GM13976 (cell line): ENCODE measurements at regions of chr5 and their contacts with region 1.

Region 1: DNA sequence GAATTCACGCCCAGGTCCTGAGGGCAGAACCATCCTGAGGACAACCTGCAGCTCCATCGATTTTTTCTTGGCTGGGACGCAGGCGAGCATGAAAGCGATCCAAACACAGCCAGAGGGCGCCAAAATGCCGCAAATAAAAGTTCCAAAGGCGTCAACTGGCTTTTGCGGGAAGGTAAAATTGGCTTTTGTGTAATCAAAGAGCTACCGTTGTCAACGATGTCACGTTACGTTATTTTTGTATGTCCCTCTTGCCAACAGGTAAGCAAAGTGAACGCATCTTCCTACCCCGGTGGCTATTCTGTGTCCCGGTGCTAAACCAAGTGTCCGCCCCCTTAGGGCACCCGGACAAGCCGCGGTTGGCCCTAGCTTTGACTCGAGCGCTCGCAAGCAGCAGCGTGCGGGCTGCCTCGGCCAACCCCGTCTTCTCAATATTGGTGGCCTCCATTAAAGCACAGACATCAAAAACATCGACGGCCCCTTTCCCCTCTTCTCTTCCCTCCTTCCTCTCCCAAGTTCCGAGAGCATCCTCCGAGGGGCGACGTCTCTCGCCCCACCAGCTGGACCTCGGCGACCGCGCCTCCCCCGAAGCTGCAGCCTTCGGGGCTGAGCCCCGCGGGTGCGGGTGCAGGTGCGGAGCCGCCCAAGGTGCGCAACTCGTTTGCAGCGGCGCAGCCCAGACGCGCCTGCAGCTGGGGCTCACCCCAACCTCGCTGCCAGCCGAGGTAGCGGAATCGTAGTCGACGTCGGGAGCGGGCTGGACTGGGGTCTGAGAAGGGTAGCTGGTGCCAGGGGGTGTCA is 1.1 kb upstream of the BASP1 start:
- DNase-seq: peak; percentile 73
- CTCF ChIP-seq: peak; percentile 81

Region 2: GRCh38 chr5:17384181-17384580 is 167.8 kb after region 1 on chr5:
- in situ Hi-C with region 1: no loop called
- DNase-seq: no peak
- CTCF ChIP-seq: no peak

Region 3: DNA sequence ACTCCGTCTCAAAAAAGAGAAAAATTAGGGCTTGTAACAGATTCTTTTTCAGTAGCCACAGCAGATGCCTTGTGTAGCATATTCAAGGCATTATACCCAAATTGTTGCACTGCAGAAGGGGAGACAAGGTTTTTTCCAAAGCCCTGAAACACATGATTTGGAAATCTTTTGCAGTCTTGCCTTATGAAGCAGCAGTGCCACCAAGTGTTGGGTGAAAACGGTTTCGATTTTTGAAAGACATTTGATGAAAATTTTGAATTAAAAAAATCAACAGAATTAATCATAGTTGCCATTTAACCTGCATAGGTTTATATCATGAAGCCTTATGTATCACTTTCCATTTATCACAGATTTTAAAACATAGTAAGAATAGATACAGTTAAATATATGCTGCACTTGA is 897.3 kb after region 1 on chr5:
- in situ Hi-C with region 1: loop called (anchors 25 kb)
- DNase-seq: no peak
- CTCF ChIP-seq: no peak

Region 4: DNA sequence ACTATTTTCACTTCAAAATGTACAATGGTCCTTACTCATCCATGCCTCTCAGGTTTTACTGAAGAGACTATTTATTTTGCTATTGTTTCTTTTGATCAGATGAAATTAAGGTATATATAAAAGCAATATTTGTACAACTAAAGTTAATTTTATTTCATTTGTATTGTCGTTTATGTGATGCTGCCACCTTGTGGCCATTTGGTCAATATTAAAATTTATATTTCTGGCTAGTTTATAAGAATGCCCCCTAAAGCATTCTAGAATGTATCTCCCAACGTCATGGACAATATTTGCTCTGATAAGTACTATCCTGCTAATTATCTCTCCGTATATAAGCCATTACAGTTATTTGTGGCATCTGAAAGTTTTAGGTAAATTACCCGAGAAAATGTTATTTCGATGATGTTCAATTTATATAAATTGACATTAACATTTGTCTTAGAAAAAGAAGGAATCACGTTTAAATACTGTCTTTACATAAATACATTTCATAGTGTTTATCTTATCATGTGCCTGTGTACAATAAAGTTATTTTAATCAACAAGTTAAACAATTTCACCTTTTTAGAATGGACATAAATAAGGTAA is 1097.9 kb after region 1 on chr5:
- in situ Hi-C with region 1: loop called (anchors 10 kb)
- DNase-seq: peak; percentile 20
- CTCF ChIP-seq: peak; percentile 41